Activated CD4-positive, alpha-beta T cell treated with anti-CD3 and anti-CD28 coated beads, Interleukin-2, amount 10 ng/mL, durations not matched to agents 24 days and 14 days (primary cell): ENCODE measurements at regions of chr1 and their contacts with region 1.

Region 1: DNA sequence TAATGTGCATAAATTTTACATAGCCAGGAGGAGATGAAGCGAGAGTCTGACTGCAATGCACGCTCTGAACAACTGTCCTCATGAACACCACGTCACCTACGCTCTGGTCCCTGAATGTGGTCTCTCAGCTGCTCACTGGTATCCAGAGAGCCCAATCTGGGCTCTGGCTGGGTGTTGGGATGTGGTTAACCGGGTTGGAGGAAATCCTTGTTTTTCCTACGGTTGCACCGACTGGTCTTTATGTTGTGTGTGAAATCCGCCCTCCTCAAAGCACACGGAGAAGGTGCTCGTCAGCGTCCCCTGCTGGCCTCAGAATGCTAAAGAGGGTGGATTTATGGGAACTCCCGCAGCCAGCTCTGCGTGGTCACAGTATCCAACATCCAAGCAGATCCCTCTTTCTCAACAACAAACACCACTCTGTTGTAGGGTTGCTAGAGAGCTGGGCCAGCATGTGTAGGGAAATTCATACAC is 51.8 kb upstream of the FAM89A start:
- DNase-seq: peak; percentile 78
- H3K4me3 Mint-ChIP-seq: no peak overlapping the region
- H3K27ac Mint-ChIP-seq: no peak overlapping the region
- H3K4me1 Mint-ChIP-seq: no peaks in the 10 kb centered on the region
- H3K27me3 Mint-ChIP-seq: peaks cover 24% of the 10 kb centered on the region

Region 2: DNA sequence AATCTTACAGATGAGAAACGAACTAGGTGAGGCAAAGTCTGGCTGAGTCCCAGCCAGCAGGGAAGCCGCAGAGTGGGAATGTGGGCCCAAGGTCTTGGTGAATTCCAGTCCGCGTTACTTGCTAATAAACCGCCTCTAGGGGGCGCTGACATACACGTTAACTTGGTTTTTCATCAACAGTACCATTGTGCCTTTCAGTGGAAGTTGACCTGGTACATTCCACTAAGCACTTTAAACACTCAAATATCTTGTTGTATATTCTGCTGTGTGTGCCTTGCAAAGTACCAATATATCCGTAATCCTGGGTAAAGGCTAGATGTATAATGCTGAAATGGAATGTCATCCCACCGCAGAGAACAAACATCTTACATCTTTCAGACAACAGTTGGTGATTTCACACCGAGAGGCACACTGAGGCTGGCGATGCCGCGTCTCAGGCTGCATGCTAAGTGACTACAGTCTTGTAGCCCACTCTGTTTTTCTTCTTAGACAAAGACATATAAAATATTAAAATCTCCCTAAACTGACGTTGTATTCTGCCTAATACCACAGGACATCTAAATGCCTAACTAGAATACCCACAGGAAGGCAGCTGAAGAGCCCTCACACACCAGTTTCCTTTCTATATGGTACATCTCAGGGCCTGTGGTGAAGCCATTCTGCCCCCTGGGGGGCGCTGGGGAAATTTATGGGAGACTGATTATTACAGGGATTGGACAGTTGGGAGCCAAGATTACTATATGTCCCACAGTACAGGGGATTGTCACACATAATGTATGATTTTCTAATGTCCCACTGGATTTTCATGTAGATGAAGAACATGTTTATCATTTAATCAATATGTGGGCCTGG is 174.4 kb before region 1 on chr1:
- intact Hi-C with region 1: loop called (anchors 1 kb)
- DNase-seq: peak; percentile 91
- H3K4me3 Mint-ChIP-seq: no peak overlapping the region
- H3K27ac Mint-ChIP-seq: no peak overlapping the region
- H3K4me1 Mint-ChIP-seq: peaks cover 7% of the 10 kb centered on the region
- H3K27me3 Mint-ChIP-seq: no peaks in the 10 kb centered on the region

Region 3: DNA sequence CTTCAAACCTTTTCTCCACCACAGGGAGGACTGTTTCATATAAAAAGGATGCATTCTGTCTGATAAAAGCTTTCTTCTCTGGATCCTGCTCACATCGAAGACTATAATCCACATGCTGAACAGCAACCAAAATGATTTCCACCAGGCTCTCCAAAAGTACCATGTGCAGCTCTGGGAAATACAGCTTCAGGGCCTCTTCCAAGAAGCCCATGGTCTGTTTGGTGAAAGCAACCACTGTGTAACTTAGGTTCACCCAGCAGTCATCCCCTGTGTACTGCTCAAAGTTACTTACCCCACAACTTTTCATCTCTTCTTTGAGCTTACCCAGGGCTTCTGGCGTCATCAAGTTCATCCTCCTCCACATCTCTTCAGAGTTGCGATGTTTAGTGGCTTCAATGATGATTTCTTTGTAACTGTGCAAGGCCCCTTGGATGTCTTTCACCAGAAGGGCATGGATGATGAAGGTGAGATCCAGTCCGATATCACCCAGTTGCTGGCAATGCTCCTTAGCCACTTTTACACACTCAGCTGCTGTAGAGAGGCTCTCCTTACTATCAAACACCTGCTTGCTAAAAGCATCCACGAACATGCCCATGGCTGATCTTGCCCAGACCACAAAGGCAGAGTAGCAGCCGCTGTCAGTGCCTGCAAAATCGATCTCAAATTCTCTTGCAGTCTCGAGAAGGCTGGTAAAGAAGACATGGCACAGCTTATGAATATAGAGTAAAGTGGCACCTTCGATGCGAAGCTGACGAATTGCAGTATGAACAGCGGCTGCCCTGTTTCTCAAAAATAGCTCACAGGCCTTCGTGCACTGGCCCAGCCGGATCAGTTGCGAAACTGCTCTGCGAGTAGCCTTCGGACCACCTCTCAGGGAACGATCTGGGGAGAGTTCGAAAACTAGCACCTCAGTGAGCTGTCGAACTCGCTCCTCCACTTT is 244.1 kb after region 1 on chr1:
- intact Hi-C with region 1: no loop called
- DNase-seq: peak; percentile 64
- H3K4me3 Mint-ChIP-seq: peak overlapping the region; percentile 95
- H3K27ac Mint-ChIP-seq: peak overlapping the region; percentile 69
- H3K4me1 Mint-ChIP-seq: peaks cover 41% of the 10 kb centered on the region
- H3K27me3 Mint-ChIP-seq: peaks cover 3% of the 10 kb centered on the region